GM13976 (cell line): ENCODE measurements at regions of chr4 and their contacts with region 1.

Region 1: GRCh38 chr4:158729716-158730559 is 6.7 kb upstream of the PPID start:
- DNase-seq: peak; percentile 51
- CTCF ChIP-seq: peak; percentile 70

Region 2: GRCh38 chr4:158652920-158653319 is 77.0 kb before region 1 on chr4:
- in situ Hi-C with region 1: no loop called
- DNase-seq: no peak
- CTCF ChIP-seq: no peak

Region 3: GRCh38 chr4:158895797-158896576 is 166.0 kb after region 1 on chr4:
- in situ Hi-C with region 1: no loop called
- DNase-seq: no peak
- CTCF ChIP-seq: no peak

Region 4: GRCh38 chr4:159175085-159175988 is 445.4 kb after region 1 on chr4:
- in situ Hi-C with region 1: loop called (anchors 25 kb)
- DNase-seq: no peak
- CTCF ChIP-seq: peak; percentile 53